A673 (cell line): ENCODE measurements at regions of chr6 and their contacts with region 1.

Region 1: DNA sequence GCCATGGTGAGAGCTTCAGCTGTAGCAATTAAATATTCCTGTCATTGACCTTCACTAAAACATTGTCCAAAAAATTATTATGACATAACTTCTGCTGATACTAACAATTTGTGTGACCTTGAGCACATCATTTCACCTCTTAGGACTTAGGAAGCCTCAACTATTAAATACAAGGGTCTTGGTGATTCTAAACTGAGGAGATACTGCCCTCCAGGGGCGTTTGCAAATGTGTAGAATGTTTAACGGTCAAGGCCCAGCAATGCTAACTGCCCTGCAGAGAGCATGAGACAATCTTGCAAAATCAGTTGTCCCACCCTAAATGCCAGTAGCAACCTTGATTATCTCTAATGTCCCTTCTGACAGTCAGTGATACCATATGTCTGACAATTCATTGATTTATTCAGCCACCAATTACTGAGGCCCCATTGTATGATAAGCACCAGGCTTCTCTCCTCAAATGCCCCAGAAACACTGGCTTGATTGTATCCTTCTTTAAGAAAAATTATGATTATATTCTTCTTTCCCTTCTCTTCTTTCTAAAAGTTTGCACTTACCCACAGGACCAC is 284.1 kb upstream of the PLN start:
- DNase-seq: peak; percentile 68
- H3K4me3 ChIP-seq: no peak overlapping the region
- H3K27ac ChIP-seq: no peak overlapping the region
- H3K4me1 ChIP-seq: no peaks in the 10 kb centered on the region
- H3K27me3 ChIP-seq: no peaks in the 10 kb centered on the region
- CTCF ChIP-seq: peak; percentile 65

Region 2: GRCh38 chr6:117346142-117346930 is 917.7 kb before region 1 on chr6:
- CTCF ChIA-PET with region 1: no interaction called
- POLR2A ChIA-PET with region 1: no interaction called
- intact Hi-C with region 1: loop called (anchors 10 kb)
- DNase-seq: peak; percentile 39
- H3K4me3 ChIP-seq: no peak overlapping the region
- H3K27ac ChIP-seq: no peak overlapping the region
- H3K4me1 ChIP-seq: no peaks in the 10 kb centered on the region
- H3K27me3 ChIP-seq: peaks cover 22% of the 10 kb centered on the region
- CTCF ChIP-seq: peak; percentile 59; the same call in 1 of the 2 replicates

Region 3: GRCh38 chr6:117976030-117976651 is 287.9 kb before region 1 on chr6:
- CTCF ChIA-PET with region 1: interaction called, 3 read pairs
- POLR2A ChIA-PET with region 1: no interaction called
- intact Hi-C with region 1: loop called (anchors 2 kb)
- DNase-seq: peak; percentile 73
- H3K4me3 ChIP-seq: no peak overlapping the region
- H3K27ac ChIP-seq: no peak overlapping the region
- H3K4me1 ChIP-seq: peaks cover 8% of the 10 kb centered on the region
- H3K27me3 ChIP-seq: peaks cover 2% of the 10 kb centered on the region
- CTCF ChIP-seq: peak; percentile 83

Region 4: DNA sequence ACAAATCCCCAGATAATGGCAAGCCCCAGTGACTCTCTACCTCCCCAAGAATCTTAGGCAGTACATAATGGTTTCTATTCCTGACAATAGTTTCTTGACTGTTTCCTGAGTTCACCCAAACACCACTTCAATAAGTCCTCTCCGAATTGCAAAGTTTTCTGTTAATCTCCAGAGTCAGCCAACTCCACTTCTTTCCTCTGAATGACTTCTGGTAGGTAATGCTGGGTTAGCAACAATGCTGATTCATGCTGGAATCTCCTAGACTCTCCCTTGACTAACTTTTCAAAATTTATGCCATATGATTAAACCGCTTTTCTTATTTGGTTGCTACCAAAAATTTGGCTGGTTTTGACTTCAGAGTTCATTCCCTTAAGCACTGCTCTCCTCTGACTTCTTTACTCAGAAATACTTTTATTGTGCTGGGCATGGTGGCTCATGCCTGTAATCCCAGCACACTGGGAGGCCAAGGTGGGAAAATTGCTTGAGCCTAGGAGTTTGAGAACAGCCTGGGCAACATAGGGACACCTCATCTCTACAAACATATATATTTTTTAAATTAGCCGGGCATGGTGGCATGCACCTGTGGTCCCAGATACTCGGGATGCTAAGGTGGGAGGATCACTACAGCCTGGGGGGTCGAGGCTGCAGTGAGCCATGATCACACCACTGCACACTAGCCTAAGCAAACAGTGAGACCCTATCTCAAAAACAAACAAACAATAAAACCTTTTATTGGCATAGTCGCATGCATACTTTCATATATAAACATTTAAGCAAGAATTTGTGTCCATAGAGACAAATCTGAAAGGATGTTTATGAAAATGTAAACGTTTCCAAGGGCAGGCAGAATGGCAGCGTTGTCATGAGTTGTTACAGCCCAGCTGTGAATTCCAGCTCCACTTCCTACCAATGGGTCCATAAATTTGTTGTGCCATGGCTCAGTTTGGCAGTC is 34.7 kb after region 1 on chr6:
- CTCF ChIA-PET with region 1: no interaction called
- POLR2A ChIA-PET with region 1: no interaction called
- intact Hi-C with region 1: no loop called
- DNase-seq: no peak
- H3K4me3 ChIP-seq: no peak overlapping the region
- H3K27ac ChIP-seq: no peak overlapping the region
- H3K4me1 ChIP-seq: no peaks in the 10 kb centered on the region
- H3K27me3 ChIP-seq: no peaks in the 10 kb centered on the region
- CTCF ChIP-seq: no peak

Region 5: DNA sequence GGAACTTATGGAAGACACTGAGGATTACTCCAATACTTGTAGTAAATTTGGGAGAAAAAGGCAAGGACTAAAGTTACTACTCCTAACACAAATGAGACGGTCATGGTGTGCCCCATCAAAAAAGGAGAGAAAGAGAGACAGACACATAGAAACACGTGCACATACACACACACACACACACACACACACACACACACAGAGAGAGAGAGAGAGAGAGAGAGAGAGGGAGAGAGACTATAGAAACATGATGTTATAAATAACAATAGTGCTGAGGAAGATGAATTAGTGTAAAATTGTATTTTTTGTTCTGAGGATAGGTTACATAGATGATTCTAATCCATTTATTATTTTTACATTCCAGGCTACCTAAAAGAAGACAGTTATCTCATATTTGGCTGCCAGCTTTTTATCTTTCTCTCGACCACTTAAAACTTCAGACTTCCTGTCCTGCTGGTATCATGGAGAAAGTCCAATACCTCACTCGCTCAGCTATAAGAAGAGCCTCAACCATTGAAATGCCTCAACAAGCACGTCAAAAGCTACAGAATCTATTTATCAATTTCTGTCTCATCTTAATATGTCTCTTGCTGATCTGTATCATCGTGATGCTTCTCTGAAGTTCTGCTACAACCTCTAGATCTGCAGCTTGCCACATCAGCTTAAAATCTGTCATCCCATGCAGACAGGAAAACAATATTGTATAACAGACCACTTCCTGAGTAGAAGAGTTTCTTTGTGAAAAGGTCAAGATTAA is 294.6 kb after region 1 on chr6:
- CTCF ChIA-PET with region 1: no interaction called
- POLR2A ChIA-PET with region 1: no interaction called
- intact Hi-C with region 1: no loop called
- DNase-seq: peak; percentile 83
- H3K4me3 ChIP-seq: no peak overlapping the region
- H3K27ac ChIP-seq: no peak overlapping the region
- H3K4me1 ChIP-seq: peaks cover 14% of the 10 kb centered on the region
- H3K27me3 ChIP-seq: no peaks in the 10 kb centered on the region
- CTCF ChIP-seq: no peak